Mammary epithelial cell (primary cell): ENCODE measurements at regions of chr16 and their contacts with region 1.

Region 1: GRCh38 chr16:82432261-82432660 is 194.5 kb upstream of the CDH13 start:
- DNase-seq: no peak
- H3K4me3 ChIP-seq: no peak overlapping the region
- H3K27ac ChIP-seq: no peak overlapping the region
- H3K4me1 ChIP-seq: no peaks in the 10 kb centered on the region
- H3K27me3 ChIP-seq: peaks cover 13% of the 10 kb centered on the region
- CTCF ChIP-seq: no peak

Region 2: GRCh38 chr16:82395212-82395611 is 37.0 kb before region 1 on chr16:
- CTCF ChIA-PET with region 1: no interaction called
- dilution Hi-C with region 1: loop called (anchors 5 kb)
- in situ Hi-C with region 1: no loop called
- intact Hi-C with region 1: no loop called
- DNase-seq: no peak
- H3K4me3 ChIP-seq: no peak overlapping the region
- H3K27ac ChIP-seq: no peak overlapping the region
- H3K4me1 ChIP-seq: no peaks in the 10 kb centered on the region
- H3K27me3 ChIP-seq: peaks cover 14% of the 10 kb centered on the region
- CTCF ChIP-seq: no peak

Region 3: GRCh38 chr16:82776470-82777146 is 344.3 kb after region 1 on chr16:
- CTCF ChIA-PET with region 1: no interaction called
- dilution Hi-C with region 1: no loop called
- in situ Hi-C with region 1: no loop called
- intact Hi-C with region 1: no loop called
- DNase-seq: no peak
- H3K4me3 ChIP-seq: no peak overlapping the region
- H3K27ac ChIP-seq: no peak overlapping the region
- H3K4me1 ChIP-seq: peaks cover 9% of the 10 kb centered on the region
- H3K27me3 ChIP-seq: no peaks in the 10 kb centered on the region
- CTCF ChIP-seq: no peak